Tibial artery (tissue), 4 donors: ENCODE measurements at regions of chr21 and their contacts with region 1.

Region 1: GRCh38 chr21:25607151-25608043 is at the start of gene MRPL39:
- DNase-seq: peak; percentile 77 to 87
- H3K4me3 ChIP-seq: peak within 1 kb of the TSS; percentile 74 to 94
- H3K27ac ChIP-seq: peak within 1 kb of the TSS; percentile 85 to 88
- H3K4me1 ChIP-seq: peaks cover 0 to 36% (median 27%) of the 10 kb centered on the region in 4 donors
- H3K27me3 ChIP-seq: no peaks in the 10 kb centered on the region
- CTCF ChIP-seq: peak; percentile 9 to 38

Region 2: DNA sequence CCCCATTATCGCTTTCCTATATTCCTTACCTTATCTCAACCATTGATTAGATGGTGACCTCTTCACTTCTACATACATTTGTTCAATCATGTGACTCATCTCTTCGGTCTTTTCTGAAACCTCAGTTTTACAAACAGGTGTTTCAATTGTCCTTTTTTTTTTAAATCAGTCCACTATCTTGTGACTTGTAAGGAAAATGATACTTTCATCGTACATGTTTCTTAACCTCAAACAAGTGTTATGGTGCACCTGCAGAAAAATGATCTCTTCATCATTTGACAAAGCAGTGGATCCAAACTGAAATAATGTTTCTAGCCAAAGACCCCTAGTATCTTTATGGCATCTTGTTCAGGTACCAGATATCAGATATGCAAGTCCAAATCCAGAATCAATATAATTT is 1157.3 kb before region 1 on chr21:
- intact Hi-C with region 1: no loop called
- DNase-seq: no peak
- H3K4me3 ChIP-seq: no peak overlapping the region
- H3K27ac ChIP-seq: no peak overlapping the region
- H3K4me1 ChIP-seq: no peaks in the 10 kb centered on the region
- H3K27me3 ChIP-seq: no peaks in the 10 kb centered on the region
- CTCF ChIP-seq: no peak

Region 3: DNA sequence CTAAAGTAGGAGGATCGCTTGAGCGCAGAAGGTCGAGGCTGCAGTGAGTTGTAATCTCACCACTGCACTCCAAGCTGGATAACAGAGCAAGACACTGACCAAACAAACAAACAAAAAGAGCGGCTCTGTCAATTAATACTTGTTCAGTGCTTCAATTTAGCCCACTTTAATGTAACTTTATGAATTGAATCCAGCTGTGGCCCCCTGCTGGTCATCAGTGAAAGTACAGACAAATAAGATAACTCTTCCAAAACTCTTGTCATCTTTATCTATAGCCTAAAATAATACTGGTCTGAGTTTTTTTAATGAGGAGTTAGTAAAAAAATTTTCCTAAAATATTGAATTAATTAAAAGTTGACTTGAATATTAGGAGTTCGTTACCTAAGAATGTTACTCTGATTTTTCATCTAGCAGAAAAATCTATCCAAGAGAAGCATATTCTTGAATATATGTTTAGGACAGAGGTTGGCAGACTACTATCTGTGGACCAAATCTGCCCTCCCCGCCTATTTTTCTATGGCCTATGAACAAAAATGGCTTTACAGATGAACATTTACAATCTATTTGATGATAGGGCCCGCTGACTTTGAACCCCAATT is 101.2 kb after region 1 on chr21:
- intact Hi-C with region 1: loop called (anchors 2 kb)
- DNase-seq: peak in 1 of 2 donors; percentile 56
- H3K4me3 ChIP-seq: no peak overlapping the region
- H3K27ac ChIP-seq: no peak overlapping the region
- H3K4me1 ChIP-seq: no peaks in the 10 kb centered on the region
- H3K27me3 ChIP-seq: no peaks in the 10 kb centered on the region
- CTCF ChIP-seq: peak; percentile 77 to 81

Region 4: DNA sequence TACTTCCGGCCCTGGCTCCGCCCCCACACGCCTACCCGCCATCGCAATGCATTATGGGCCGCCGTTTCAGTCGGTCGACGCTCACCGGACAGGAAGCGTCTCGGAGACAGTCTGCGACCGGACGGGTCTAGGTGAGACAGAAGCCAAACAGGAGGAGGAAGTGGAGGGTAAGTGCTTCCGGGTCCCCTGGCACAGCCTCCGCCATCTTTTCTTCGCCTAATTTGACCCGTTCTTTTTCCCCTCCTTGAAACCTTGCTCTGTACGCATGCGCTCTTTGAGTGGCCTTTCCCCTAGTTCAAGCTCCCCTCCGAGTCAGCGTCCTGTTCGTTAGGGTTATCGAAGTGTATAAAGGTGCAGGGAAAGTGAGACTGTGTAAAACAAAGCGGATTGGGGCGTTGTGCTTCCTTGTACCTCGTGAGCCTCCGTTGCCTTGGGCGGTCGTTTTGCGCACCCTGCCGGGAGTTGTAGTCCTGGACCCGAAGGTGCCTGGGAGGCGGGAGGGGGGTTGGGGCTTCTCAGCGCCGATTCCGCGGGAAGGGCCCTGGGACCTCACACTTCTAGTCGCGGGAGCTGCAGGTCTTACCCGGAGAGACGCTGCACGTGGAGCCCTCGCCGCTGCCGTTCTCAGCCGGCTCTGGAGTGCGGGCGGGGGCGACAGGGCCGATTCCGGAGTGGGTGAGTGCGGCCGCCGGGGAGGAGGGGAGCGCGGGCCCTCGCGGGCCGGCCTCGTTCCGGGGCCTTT is 127.7 kb after region 1 on chr21 and contains the starts of genes ATP5PF and GABPA:
- intact Hi-C with region 1: loop called (anchors 10 kb)
- DNase-seq: peak; percentile 97 to 98
- H3K4me3 ChIP-seq: peak within 1 kb of the TSS; percentile 82 to 97
- H3K27ac ChIP-seq: peak within 1 kb of the TSS; percentile 96 to 99
- H3K4me1 ChIP-seq: peaks cover 0 to 46% (median 26%) of the 10 kb centered on the region in 4 donors
- H3K27me3 ChIP-seq: no peaks in the 10 kb centered on the region
- CTCF ChIP-seq: peak in 1 of 2 experiments; percentile 19

Region 5: GRCh38 chr21:26153758-26154157 is 546.4 kb after region 1 on chr21:
- intact Hi-C with region 1: no loop called
- DNase-seq: no peak
- H3K4me3 ChIP-seq: no peak overlapping the region
- H3K27ac ChIP-seq: no peak overlapping the region
- H3K4me1 ChIP-seq: peaks cover 0 to 29% (median 6%) of the 10 kb centered on the region in 4 donors
- H3K27me3 ChIP-seq: no peaks in the 10 kb centered on the region
- CTCF ChIP-seq: no peak